ENCODE measurements at regions of chr7 and their contacts with region 1.

Region 1: DNA sequence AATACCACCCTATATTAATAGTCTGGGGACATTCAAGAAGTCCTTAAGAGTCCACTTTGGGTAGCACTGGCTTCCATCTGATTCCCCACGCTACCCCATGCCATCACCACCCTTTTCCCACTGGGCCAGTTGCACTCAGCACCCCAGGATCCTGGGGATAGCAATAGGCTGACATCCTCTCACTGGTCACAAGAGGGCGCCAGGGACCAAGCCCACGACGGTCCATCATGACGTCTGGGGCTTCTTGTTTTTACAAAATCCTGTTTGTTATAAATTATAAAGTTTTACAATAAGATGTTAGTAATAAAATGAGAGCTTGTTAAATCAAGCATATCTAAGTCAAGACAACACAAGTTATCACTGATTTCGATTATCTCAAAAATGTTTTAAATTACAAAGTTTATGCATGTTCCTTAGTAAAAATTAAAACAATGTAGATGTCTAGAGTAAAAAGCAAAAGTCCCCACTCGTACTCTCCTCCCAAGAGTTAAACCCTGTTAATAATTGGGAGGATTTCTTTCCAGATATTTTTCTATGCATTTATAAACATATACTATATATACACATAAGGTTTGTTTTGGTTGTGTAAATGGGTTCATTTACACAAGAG is 15.4 kb downstream of the GPNMB start:
- DNase-seq: peak; percentile 40 to 67 (median 53)
- ATAC-seq: peak in 3 of 4 donors; percentile 73 to 85 (median 83)
- H3K4me3 ChIP-seq: no peak overlapping the region
- H3K27ac ChIP-seq: no peak overlapping the region
- H3K4me1 ChIP-seq: no peaks in the 10 kb centered on the region
- H3K27me3 ChIP-seq: no peaks in the 10 kb centered on the region
- CTCF ChIP-seq: peak; percentile 59 to 89 (median 75)
- POLR2A ChIP-seq: no peak

Region 2: DNA sequence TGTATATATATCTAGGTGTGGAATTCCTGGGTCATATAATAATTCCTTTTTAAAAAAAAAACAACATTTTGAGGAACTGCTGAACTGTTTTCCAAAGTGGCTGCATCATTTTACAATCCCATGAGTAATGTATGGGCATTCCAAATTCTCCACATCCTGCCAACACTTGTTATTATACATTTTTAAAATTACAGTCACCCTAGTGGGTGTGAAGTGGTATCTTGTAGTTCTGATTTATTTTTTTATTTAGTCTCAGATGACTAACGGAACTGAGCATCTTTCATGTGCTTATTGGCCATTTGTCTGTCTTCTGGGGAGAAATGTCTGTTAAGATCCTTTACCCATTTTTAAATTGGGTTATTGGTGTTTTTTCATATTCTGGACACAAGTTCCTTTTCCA is 168.4 kb before region 1 on chr7:
- intact Hi-C with region 1: loop called in 1 of 10 experiments (anchors 10 kb)
- DNase-seq: no peak
- ATAC-seq: no peak
- H3K4me3 ChIP-seq: no peak overlapping the region
- H3K27ac ChIP-seq: no peak overlapping the region
- H3K4me1 ChIP-seq: no peaks in the 10 kb centered on the region
- H3K27me3 ChIP-seq: no peaks in the 10 kb centered on the region
- CTCF ChIP-seq: no peak
- POLR2A ChIP-seq: no peak

Region 3: GRCh38 chr7:23247603-23248335 is 14.2 kb before region 1 on chr7:
- intact Hi-C with region 1: no loop called
- DNase-seq: peak; percentile 42 to 81 (median 52)
- ATAC-seq: peak; percentile 48 to 85 (median 76)
- H3K4me3 ChIP-seq: peak overlapping the region; percentile 11 to 72 (median 58)
- H3K27ac ChIP-seq: peak overlapping the region; percentile 16 to 90 (median 82)
- H3K4me1 ChIP-seq: peaks cover 0 to 33% (median 15%) of the 10 kb centered on the region in 12 donors
- H3K27me3 ChIP-seq: peaks cover 0 to 4% (median 0%) of the 10 kb centered on the region in 9 donors
- CTCF ChIP-seq: no peak
- POLR2A ChIP-seq: peak in 1 of 2 donors; percentile 14

Region 4: GRCh38 chr7:23347682-23348180 is 85.8 kb after region 1 on chr7:
- intact Hi-C with region 1: no loop called
- DNase-seq: no peak
- ATAC-seq: no peak
- H3K4me3 ChIP-seq: peak overlapping the region in 1 of 12 donors; percentile 59
- H3K27ac ChIP-seq: peak overlapping the region in 1 of 12 donors; percentile 52
- H3K4me1 ChIP-seq: peaks cover 0 to 7% (median 0%) of the 10 kb centered on the region in 12 donors
- H3K27me3 ChIP-seq: peaks cover 0 to 4% (median 0%) of the 10 kb centered on the region in 9 donors
- CTCF ChIP-seq: no peak
- POLR2A ChIP-seq: no peak

Region 5: GRCh38 chr7:23454881-23455506 is 193.0 kb after region 1 on chr7:
- intact Hi-C with region 1: loop called in 1 of 10 experiments (anchors 5 kb)
- DNase-seq: no peak
- ATAC-seq: no peak
- H3K4me3 ChIP-seq: no peak overlapping the region
- H3K27ac ChIP-seq: no peak overlapping the region
- H3K4me1 ChIP-seq: no peaks in the 10 kb centered on the region
- H3K27me3 ChIP-seq: peaks cover 0 to 79% (median 15%) of the 10 kb centered on the region in 9 donors
- CTCF ChIP-seq: no peak
- POLR2A ChIP-seq: no peak